ENCODE measurements at regions of chr3 and their contacts with region 1.

Region 1: GRCh38 chr3:3302964-3303363 is 123.5 kb upstream of the CRBN start:
- DNase-seq: no peak
- H3K4me3 ChIP-seq: no peak overlapping the region
- H3K27ac ChIP-seq: no peak overlapping the region
- H3K4me1 ChIP-seq: no peaks in the 10 kb centered on the region
- H3K27me3 ChIP-seq: no peaks in the 10 kb centered on the region
- CTCF ChIP-seq: no peak

Region 2: GRCh38 chr3:3356846-3357245 is 53.9 kb after region 1 on chr3:
- CTCF ChIA-PET with region 1: no interaction called
- dilution Hi-C with region 1: loop called (anchors 5 kb)
- in situ Hi-C with region 1: no loop called
- intact Hi-C with region 1: no loop called
- DNase-seq: no peak
- H3K4me3 ChIP-seq: no peak overlapping the region
- H3K27ac ChIP-seq: no peak overlapping the region
- H3K4me1 ChIP-seq: no peaks in the 10 kb centered on the region
- H3K27me3 ChIP-seq: no peaks in the 10 kb centered on the region
- CTCF ChIP-seq: no peak